AG04449 (cell line): ENCODE measurements at regions of chr19 and their contacts with region 1.

Region 1: DNA sequence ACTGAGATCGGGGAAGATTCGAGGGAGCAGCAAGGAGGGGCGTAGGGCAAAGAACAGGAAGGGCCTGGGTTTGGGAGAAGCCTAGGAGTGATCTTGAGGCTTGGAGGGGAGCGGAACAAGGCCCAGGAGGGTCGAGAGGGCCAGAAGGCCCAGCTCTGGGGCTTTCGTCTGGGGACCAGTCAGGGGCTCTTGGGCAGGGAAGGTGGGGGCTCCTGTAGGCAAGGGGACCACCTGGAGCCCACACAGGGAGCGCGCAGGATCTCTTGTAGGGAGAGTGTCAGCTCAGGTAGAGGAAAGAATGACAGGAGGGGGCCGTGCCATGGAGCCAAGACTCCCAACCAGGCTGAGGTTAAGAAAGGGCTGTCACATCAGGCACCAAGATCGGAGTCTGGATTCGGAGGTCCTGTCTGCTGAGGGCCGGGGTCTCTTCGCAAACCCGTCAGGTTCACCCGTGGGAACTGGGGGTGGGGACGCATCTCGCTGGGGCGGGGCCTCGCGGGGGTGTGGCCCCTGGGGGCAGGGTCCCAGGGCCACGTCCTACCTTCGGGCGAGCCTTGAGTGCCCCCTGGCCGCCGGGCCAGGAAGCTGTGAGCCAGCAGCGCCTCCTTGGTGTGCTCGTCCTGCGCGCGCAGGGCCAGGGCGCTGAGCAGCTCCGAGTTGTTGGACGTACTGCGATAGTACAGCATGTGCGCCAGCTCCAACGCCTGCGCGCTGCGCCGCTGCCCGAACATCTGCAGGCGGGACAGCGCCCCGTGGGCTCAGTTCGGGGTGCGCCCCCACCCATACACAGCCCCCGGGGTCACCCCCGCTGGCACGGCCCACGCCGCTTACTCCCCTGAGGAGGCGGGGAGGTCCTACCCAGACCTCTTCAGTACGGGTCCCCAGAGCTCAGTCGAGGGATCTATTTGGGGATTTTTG is 8.4 kb downstream of the EMP3 start:
- DNase-seq: no peak
- H3K4me3 ChIP-seq: peak overlapping the region; percentile 58
- CTCF ChIP-seq: peak; percentile 96

Region 2: GRCh38 chr19:48255376-48256303 is 78.1 kb before region 1 on chr19 and contains the start of gene CARD8:
- CTCF ChIA-PET with region 1: interaction called, 12 read pairs
- POLR2A ChIA-PET with region 1: no interaction called
- DNase-seq: no peak
- H3K4me3 ChIP-seq: peak within 1 kb of the TSS; percentile 84
- CTCF ChIP-seq: no peak

Region 3: GRCh38 chr19:48290771-48291488 is 42.8 kb before region 1 on chr19:
- CTCF ChIA-PET with region 1: interaction called, 10 read pairs
- POLR2A ChIA-PET with region 1: no interaction called
- DNase-seq: no peak
- H3K4me3 ChIP-seq: peak overlapping the region; percentile 61
- CTCF ChIP-seq: peak; percentile 95

Region 4: DNA sequence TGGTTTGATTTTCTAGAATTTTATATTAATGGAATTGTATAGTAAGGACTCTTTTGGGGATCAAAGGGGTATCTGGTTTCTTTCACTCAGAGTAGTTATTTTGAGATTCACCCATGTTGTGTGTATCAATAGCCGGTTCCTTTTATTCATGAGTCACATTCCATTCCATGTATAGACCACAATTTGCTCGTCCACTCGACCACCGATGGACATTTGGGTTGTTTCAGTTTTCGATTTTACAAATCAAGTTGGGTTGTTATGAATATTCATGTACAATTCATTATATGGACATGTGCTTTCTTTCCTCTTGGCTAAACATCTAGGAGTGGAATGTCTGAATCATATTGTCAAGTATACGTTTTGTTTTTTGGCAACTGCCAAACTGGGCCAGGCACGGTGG is 18.0 kb before region 1 on chr19:
- CTCF ChIA-PET with region 1: interaction called, 213 read pairs
- POLR2A ChIA-PET with region 1: interaction called, 15 read pairs
- DNase-seq: no peak
- H3K4me3 ChIP-seq: no peak overlapping the region
- CTCF ChIP-seq: no peak

Region 5: GRCh38 chr19:48348035-48348434 is 14.3 kb after region 1 on chr19:
- CTCF ChIA-PET with region 1: interaction called, 18 read pairs
- POLR2A ChIA-PET with region 1: no interaction called
- DNase-seq: no peak
- H3K4me3 ChIP-seq: no peak overlapping the region
- CTCF ChIP-seq: no peak

Region 6: GRCh38 chr19:48372904-48373303 is 39.2 kb after region 1 on chr19:
- CTCF ChIA-PET with region 1: no interaction called
- POLR2A ChIA-PET with region 1: no interaction called
- DNase-seq: no peak
- H3K4me3 ChIP-seq: no peak overlapping the region
- CTCF ChIP-seq: no peak

Region 7: GRCh38 chr19:48433337-48433736 is 99.6 kb after region 1 on chr19:
- CTCF ChIA-PET with region 1: no interaction called
- POLR2A ChIA-PET with region 1: no interaction called
- DNase-seq: no peak
- H3K4me3 ChIP-seq: no peak overlapping the region
- CTCF ChIP-seq: no peak